ENCODE measurements at regions of chr12 and their contacts with region 1.

Region 1: GRCh38 chr12:106247674-106248311 is at the start of gene CKAP4:
- DNase-seq: no peak
- ATAC-seq: peak; percentile 63
- H3K4me3 ChIP-seq: peak within 1 kb of the TSS; percentile 72 to 93
- H3K27ac ChIP-seq: peak within 1 kb of the TSS; percentile 74
- H3K4me1 ChIP-seq: peaks cover 17 to 40% of the 10 kb centered on the region in 2 experiments
- H3K27me3 ChIP-seq: no peaks in the 10 kb centered on the region
- CTCF ChIP-seq: no peak
- POLR2A ChIP-seq: peak; percentile 36
- RAD21 ChIP-seq: no peak
- total RNA-seq, gene CKAP4: 45.9 TPM

Region 2: GRCh38 chr12:106269150-106269771 is 21.5 kb after region 1 on chr12:
- CTCF ChIA-PET with region 1: no interaction called
- POLR2A ChIA-PET with region 1: no interaction called
- RAD21 ChIA-PET with region 1: no interaction called
- intact Hi-C with region 1: loop called (anchors 1 kb)
- DNase-seq: no peak
- ATAC-seq: no peak
- H3K4me3 ChIP-seq: no peak overlapping the region
- H3K27ac ChIP-seq: no peak overlapping the region
- H3K4me1 ChIP-seq: no peaks in the 10 kb centered on the region
- H3K27me3 ChIP-seq: no peaks in the 10 kb centered on the region
- CTCF ChIP-seq: no peak
- POLR2A ChIP-seq: no peak
- RAD21 ChIP-seq: no peak

Region 3: DNA sequence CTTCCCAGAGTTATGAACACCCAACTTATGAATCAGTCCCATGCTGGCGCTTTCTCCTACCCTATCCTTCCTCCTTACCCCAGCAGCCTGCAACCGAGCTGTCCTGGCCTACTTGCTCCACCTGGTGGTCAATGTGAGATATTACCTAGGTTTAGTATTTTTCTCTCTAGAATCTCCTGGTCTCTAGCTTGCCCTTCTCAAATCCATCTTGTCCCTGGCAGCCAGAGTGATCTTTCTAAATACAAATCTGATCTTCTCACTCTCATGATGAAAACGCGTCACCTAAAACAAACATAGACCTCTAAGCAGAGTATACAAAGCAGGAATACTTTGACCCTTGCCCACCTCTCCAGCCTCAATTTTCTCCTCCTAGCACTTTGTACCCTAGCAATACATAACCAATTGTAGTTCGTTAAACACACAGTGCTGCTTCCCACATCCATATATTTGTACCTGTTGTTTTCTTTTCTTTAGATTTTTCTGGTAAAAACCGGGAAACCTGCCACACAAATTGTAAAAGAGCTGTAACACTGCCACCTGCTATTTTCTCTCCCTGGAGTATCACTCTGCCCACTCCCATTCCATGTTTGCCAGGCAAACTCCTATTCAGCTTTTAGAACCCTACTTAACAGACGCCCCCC is 34.8 kb after region 1 on chr12:
- CTCF ChIA-PET with region 1: interaction called, 6 read pairs
- POLR2A ChIA-PET with region 1: interaction called, 3 read pairs
- RAD21 ChIA-PET with region 1: no interaction called
- intact Hi-C with region 1: loop called (anchors 5 kb)
- DNase-seq: peak; percentile 67
- ATAC-seq: peak; percentile 94
- H3K4me3 ChIP-seq: no peak overlapping the region
- H3K27ac ChIP-seq: no peak overlapping the region
- H3K4me1 ChIP-seq: peaks cover under 1 to 3% of the 10 kb centered on the region in 2 experiments; a peak in 3 of 4 replicates
- H3K27me3 ChIP-seq: no peaks in the 10 kb centered on the region
- CTCF ChIP-seq: peak; percentile 70 to 86 (median 83)
- POLR2A ChIP-seq: no peak
- RAD21 ChIP-seq: peak; percentile 89

Region 4: GRCh38 chr12:106302401-106303201 is 54.8 kb after region 1 on chr12 and contains the start of gene TCP11L2:
- CTCF ChIA-PET with region 1: no interaction called
- POLR2A ChIA-PET with region 1: no interaction called
- RAD21 ChIA-PET with region 1: no interaction called
- intact Hi-C with region 1: loop called (anchors 5 kb)
- DNase-seq: no peak
- ATAC-seq: peak; percentile 86
- H3K4me3 ChIP-seq: peak within 1 kb of the TSS; percentile 75 to 83
- H3K27ac ChIP-seq: peak within 1 kb of the TSS; percentile 61; the same call in 1 of the 2 replicates
- H3K4me1 ChIP-seq: peaks cover 7 to 22% of the 10 kb centered on the region in 2 experiments
- H3K27me3 ChIP-seq: no peaks in the 10 kb centered on the region
- CTCF ChIP-seq: no peak
- POLR2A ChIP-seq: no peak
- RAD21 ChIP-seq: no peak
- total RNA-seq, gene TCP11L2: 14.4 TPM

Region 5: DNA sequence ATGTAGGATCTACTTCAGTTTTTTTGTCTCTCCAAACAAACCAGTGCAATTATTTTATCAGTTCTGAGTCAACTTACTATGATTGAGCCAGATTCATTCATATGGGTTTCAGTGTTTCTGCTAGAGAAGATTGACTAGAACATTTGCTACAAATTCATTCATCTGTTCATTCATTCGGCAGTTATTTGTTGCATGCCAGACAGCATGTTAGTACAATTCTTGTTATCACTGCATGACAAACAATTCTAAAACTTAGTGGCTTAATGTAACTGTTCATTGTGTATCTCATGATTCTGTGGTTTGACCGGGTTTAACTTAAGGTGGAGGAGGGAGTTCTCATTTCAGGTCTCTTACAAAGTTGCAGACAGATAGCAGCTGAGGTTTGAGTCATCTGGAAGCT is 162.1 kb after region 1 on chr12:
- CTCF ChIA-PET with region 1: no interaction called
- POLR2A ChIA-PET with region 1: no interaction called
- RAD21 ChIA-PET with region 1: no interaction called
- intact Hi-C with region 1: no loop called
- DNase-seq: no peak
- ATAC-seq: no peak
- H3K4me3 ChIP-seq: no peak overlapping the region
- H3K27ac ChIP-seq: no peak overlapping the region
- H3K4me1 ChIP-seq: peaks cover 0 to 1% of the 10 kb centered on the region in 2 experiments; a peak in 1 of 4 replicates
- H3K27me3 ChIP-seq: no peaks in the 10 kb centered on the region
- CTCF ChIP-seq: no peak
- POLR2A ChIP-seq: no peak
- RAD21 ChIP-seq: no peak

Measured in HCT116 (cell line).